Heart left ventricle (tissue), 16 donors: ENCODE measurements at regions of chr6 and their contacts with region 1.

Region 1: DNA sequence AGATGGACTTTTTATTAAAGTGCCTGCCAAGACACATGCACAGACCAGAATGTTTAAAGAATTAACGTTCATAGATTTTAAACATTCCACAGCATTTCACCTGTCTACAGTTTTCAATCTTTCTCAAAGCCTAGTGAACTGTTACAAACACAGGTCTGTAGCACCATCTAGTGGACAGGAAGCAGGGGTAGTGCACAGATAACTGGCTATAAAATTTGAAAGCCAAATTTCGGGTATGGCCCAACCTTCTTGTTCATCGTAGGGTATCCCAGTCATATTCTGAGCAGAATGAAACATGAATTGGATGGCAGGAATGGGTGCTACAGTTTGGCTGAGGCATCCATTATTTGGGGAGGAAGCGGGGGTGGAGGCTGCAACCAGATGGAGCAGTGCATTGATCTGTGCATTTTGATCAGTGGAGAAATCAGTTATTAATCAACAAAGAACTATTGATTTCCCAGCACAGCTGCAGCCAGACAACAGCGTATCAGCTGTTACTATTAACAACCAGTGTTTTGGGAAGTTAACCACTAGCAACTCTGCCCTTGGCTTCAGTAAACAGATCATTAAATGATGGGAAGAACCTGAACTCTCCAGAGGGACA is 56.1 kb upstream of the B3GAT2 start:
- DNase-seq: peak in 2 of 5 donors; percentile 16 to 31
- ATAC-seq: peak in 3 of 4 donors; percentile 57 to 74 (median 69)
- H3K4me3 ChIP-seq: no peak overlapping the region
- H3K27ac ChIP-seq: no peak overlapping the region
- H3K4me1 ChIP-seq: no peaks in the 10 kb centered on the region
- H3K27me3 ChIP-seq: no peaks in the 10 kb centered on the region
- CTCF ChIP-seq: peak; percentile 62 to 89 (median 77)
- POLR2A ChIP-seq: no peak

Region 2: GRCh38 chr6:70210462-70210861 is 802.5 kb before region 1 on chr6:
- intact Hi-C with region 1: loop called in 3 of 10 experiments (anchors 5 to 10 kb)
- DNase-seq: no peak
- ATAC-seq: no peak
- H3K4me3 ChIP-seq: no peak overlapping the region
- H3K27ac ChIP-seq: no peak overlapping the region
- H3K4me1 ChIP-seq: no peaks in the 10 kb centered on the region
- H3K27me3 ChIP-seq: no peaks in the 10 kb centered on the region
- CTCF ChIP-seq: peak in 4 of 12 donors; percentile 12 to 20 (median 14)
- POLR2A ChIP-seq: no peak

Region 3: DNA sequence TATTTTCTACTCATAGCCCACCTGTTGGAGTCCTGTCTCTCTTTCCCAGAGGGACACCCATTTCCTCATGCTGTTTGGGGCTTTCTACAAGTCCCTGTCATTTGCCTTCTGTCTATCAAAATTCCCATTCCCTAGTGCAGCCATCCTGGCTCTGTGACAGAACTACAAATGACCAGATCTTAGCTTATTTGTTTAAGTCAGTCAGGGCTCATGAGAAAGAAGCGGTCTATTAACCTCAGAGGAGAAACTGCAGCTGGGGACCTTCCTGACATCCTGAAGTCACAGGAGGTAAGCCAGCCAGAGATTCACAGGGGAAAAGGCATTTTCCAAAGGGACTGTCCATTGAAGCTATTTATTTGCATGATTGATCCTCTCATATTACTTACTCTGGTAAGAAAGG is 708.4 kb before region 1 on chr6:
- intact Hi-C with region 1: loop called in 3 of 10 experiments (anchors 5 to 10 kb)
- DNase-seq: no peak
- ATAC-seq: peak in 1 of 4 donors; percentile 32
- H3K4me3 ChIP-seq: no peak overlapping the region
- H3K27ac ChIP-seq: no peak overlapping the region
- H3K4me1 ChIP-seq: no peaks in the 10 kb centered on the region
- H3K27me3 ChIP-seq: peaks cover 0 to 11% (median 0%) of the 10 kb centered on the region in 9 donors
- CTCF ChIP-seq: no peak
- POLR2A ChIP-seq: no peak

Region 4: DNA sequence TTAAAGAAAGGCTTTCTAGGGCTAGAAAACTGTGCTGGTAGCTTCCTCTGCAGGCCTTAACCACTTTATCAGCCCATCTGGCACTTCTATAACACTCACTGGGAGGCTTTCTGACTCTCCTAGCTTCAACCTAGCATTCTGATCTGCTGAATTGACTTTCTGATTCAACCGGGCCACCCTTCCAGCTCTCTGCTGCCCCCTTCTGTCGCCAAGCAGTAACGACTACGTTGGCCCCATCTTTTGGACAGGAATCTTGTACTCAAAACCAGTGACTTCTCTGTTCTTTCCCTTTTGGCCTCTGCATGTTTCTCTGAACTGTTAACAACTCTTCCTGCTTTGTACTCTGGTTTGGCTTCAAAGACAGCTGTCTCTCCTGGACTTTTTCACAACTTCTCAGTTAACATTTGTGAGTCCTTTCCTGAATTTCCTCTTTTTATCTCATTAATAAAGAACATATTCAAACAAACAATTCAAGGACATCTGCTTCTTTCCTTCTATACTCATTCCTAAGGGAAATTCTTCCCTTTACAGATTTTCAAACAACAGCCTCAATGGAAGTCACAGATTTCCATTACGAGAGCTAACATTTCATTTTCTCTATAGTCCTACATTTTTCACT is 643.5 kb before region 1 on chr6:
- intact Hi-C with region 1: loop called in 4 of 10 experiments (anchors 2 to 10 kb)
- DNase-seq: peak in 4 of 5 donors; percentile 33 to 69 (median 52)
- ATAC-seq: peak; percentile 20 to 76 (median 66)
- H3K4me3 ChIP-seq: no peak overlapping the region
- H3K27ac ChIP-seq: no peak overlapping the region
- H3K4me1 ChIP-seq: no peaks in the 10 kb centered on the region
- H3K27me3 ChIP-seq: no peaks in the 10 kb centered on the region
- CTCF ChIP-seq: peak; percentile 78 to 97 (median 90)
- POLR2A ChIP-seq: no peak

Region 5: GRCh38 chr6:70547313-70547712 is 465.7 kb before region 1 on chr6:
- intact Hi-C with region 1: loop called in 1 of 10 experiments (anchors 10 kb)
- DNase-seq: no peak
- ATAC-seq: peak; percentile 69 to 86 (median 77)
- H3K4me3 ChIP-seq: no peak overlapping the region
- H3K27ac ChIP-seq: peak overlapping the region in 1 of 12 donors; percentile 5
- H3K4me1 ChIP-seq: peaks cover 0 to 7% (median 0%) of the 10 kb centered on the region in 12 donors
- H3K27me3 ChIP-seq: no peaks in the 10 kb centered on the region
- CTCF ChIP-seq: peak in 11 of 12 donors; percentile 17 to 61 (median 47)
- POLR2A ChIP-seq: no peak